ENCODE measurements at regions of chr13 and their contacts with region 1.

Region 1: DNA sequence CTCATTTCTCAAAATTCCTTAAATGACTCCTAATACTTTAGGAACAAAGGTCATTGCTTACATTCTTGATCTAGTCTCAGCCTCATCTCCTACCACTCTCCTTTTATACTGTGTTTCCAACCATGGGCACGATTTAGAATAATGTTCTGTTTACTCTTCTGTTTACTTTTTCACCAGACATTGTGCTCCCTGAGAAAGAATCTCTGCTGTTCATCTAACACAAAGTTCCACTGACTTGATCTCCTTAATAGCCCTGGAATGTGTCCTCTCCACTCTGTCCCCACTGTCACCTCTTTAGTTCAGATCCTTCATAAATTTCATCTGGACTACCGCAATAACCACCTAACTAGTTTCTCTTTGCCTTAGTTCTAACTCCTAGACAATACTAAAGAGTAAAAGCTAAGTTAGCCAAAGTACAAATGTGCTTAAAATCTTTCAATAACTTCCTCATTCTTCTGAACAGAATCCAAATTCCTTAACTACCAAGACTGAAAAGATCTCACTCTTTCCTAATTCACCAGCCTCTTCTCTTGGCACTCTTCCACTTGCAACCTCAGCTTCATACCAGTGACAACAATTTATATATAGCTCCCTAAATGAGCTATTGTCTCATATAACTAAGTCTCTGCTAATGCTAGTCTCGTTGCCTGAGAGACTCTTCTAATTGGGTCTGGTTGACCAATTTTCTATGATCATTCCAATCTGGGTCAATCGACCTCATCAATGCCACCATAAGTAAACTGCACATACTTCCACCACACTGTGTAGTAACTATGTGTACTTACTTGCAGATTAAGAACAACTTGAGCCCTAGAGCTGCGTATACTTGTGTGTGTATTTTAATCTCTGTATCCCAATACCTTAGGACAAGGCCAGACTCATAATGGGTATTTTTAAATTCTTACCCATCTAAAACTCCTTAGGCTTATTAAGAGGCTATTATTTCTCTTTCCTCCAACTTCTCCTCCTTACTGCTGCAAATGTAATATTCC is 179.9 kb downstream of the VWA8 start:
- DNase-seq: no peak
- ATAC-seq: no peak
- H3K4me3 ChIP-seq: no peak overlapping the region
- H3K27ac ChIP-seq: no peak overlapping the region
- H3K4me1 ChIP-seq: no peaks in the 10 kb centered on the region
- H3K27me3 ChIP-seq: no peaks in the 10 kb centered on the region
- CTCF ChIP-seq: no peak
- EP300 ChIP-seq: no peak
- POLR2A ChIP-seq: no peak
- RAD21 ChIP-seq: no peak

Region 2: GRCh38 chr13:41837629-41838028 is 56.6 kb after region 1 on chr13:
- CTCF ChIA-PET with region 1: no interaction called
- POLR2A ChIA-PET with region 1: no interaction called
- RAD21 ChIA-PET with region 1: no interaction called
- SMC1A ChIA-PET with region 1: no interaction called
- in situ Hi-C with region 1: no loop called
- intact Hi-C with region 1: no loop called
- DNase-seq: no peak
- ATAC-seq: peak; percentile 41; the same call in 1 of the 3 replicates
- H3K4me3 ChIP-seq: no peak overlapping the region
- H3K27ac ChIP-seq: no peak overlapping the region
- H3K4me1 ChIP-seq: no peaks in the 10 kb centered on the region; the same call in 1 of the 2 replicates
- H3K27me3 ChIP-seq: no peaks in the 10 kb centered on the region
- CTCF ChIP-seq: no peak
- EP300 ChIP-seq: no peak
- POLR2A ChIP-seq: no peak
- RAD21 ChIP-seq: no peak

Region 3: DNA sequence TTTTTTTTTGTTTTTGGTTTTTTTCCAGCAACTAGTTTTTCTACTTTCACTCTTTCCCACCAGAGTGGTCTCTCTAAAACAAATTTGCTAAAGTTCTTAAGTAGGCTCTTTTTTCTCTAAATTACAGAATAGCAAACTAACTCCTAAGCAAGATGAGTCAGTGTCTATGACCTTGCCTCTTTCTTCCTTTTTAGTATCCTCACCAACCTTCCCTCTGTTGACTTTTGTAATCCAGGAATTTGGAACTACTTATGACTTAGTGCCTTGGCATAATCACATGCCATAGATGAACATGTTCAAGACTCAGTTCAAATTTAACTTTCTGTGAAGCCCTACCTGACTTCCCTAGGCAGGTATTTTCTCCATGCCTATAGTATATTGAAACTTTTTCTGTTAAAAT is 458.6 kb after region 1 on chr13:
- CTCF ChIA-PET with region 1: no interaction called
- POLR2A ChIA-PET with region 1: interaction called, 11 read pairs
- RAD21 ChIA-PET with region 1: no interaction called
- SMC1A ChIA-PET with region 1: no interaction called
- in situ Hi-C with region 1: no loop called
- intact Hi-C with region 1: no loop called
- DNase-seq: no peak
- ATAC-seq: no peak
- H3K4me3 ChIP-seq: no peak overlapping the region
- H3K27ac ChIP-seq: no peak overlapping the region
- H3K4me1 ChIP-seq: no peaks in the 10 kb centered on the region
- H3K27me3 ChIP-seq: no peaks in the 10 kb centered on the region
- CTCF ChIP-seq: no peak
- EP300 ChIP-seq: no peak
- POLR2A ChIP-seq: no peak
- RAD21 ChIP-seq: no peak

Measured in GM12878 (cell line).